CD4-positive, alpha-beta T cell (primary cell): ENCODE measurements at regions of chr10 and their contacts with region 1.

Region 1: GRCh38 chr10:72273410-72274212 is at the start of gene DDIT4:
- DNase-seq: peak; percentile 94 to 99 (median 97)
- ATAC-seq: peak; percentile 93
- H3K4me3 ChIP-seq: peak within 1 kb of the TSS; percentile 90
- H3K4me3 Mint-ChIP-seq: peak within 1 kb of the TSS; percentile 100
- H3K27ac ChIP-seq: peak within 1 kb of the TSS; percentile 78 to 88
- H3K27ac Mint-ChIP-seq: peak within 1 kb of the TSS; percentile 89
- H3K4me1 ChIP-seq: peaks cover 48% of the 10 kb centered on the region
- H3K4me1 Mint-ChIP-seq: peaks cover 64% of the 10 kb centered on the region
- H3K27me3 ChIP-seq: no peaks in the 10 kb centered on the region
- H3K27me3 Mint-ChIP-seq: no peaks in the 10 kb centered on the region
- CTCF ChIP-seq: no peak
- total RNA-seq, gene DDIT4: 427 to 436 TPM

Region 2: GRCh38 chr10:72016608-72017312 is 256.9 kb before region 1 on chr10:
- CTCF ChIA-PET with region 1: no interaction called
- POLR2A ChIA-PET with region 1: no interaction called
- intact Hi-C with region 1: no loop called
- DNase-seq: no peak
- ATAC-seq: no peak
- H3K4me3 ChIP-seq: no peak overlapping the region
- H3K4me3 Mint-ChIP-seq: no peak overlapping the region
- H3K27ac ChIP-seq: no peak overlapping the region
- H3K27ac Mint-ChIP-seq: no peak overlapping the region
- H3K4me1 ChIP-seq: peaks cover 5% of the 10 kb centered on the region
- H3K4me1 Mint-ChIP-seq: no peaks in the 10 kb centered on the region
- H3K27me3 ChIP-seq: no peaks in the 10 kb centered on the region
- H3K27me3 Mint-ChIP-seq: no peaks in the 10 kb centered on the region
- CTCF ChIP-seq: no peak

Region 3: GRCh38 chr10:72215652-72216549 is 57.7 kb before region 1 on chr10 and contains the starts of genes ANAPC16 and ASCC1:
- CTCF ChIA-PET with region 1: interaction called, 5 read pairs
- POLR2A ChIA-PET with region 1: interaction called, 15 read pairs
- intact Hi-C with region 1: loop called in 1 of 2 experiments (anchors 5 kb)
- DNase-seq: peak; percentile 86 to 97 (median 94)
- ATAC-seq: peak; percentile 79
- H3K4me3 ChIP-seq: peak within 1 kb of the TSS; percentile 83
- H3K4me3 Mint-ChIP-seq: peak within 1 kb of the TSS; percentile 97
- H3K27ac ChIP-seq: peak within 1 kb of the TSS; percentile 89 to 98
- H3K27ac Mint-ChIP-seq: peak within 1 kb of the TSS; percentile 94
- H3K4me1 ChIP-seq: peaks cover 62% of the 10 kb centered on the region
- H3K4me1 Mint-ChIP-seq: peaks cover 50% of the 10 kb centered on the region
- H3K27me3 ChIP-seq: no peaks in the 10 kb centered on the region
- H3K27me3 Mint-ChIP-seq: no peaks in the 10 kb centered on the region
- CTCF ChIP-seq: no peak
- total RNA-seq, gene ANAPC16: 61.9 to 64.3 TPM
- total RNA-seq, gene ASCC1: 16.5 to 19.0 TPM

Region 4: GRCh38 chr10:72248468-72249151 is 25.0 kb before region 1 on chr10:
- CTCF ChIA-PET with region 1: interaction called, 4 read pairs
- POLR2A ChIA-PET with region 1: interaction called, 49 read pairs
- intact Hi-C with region 1: loop called (anchors 1 to 2 kb)
- DNase-seq: peak; percentile 54 to 96 (median 64)
- ATAC-seq: peak; percentile 87
- H3K4me3 ChIP-seq: peak overlapping the region; percentile 31
- H3K4me3 Mint-ChIP-seq: peak overlapping the region; percentile 85
- H3K27ac ChIP-seq: peak overlapping the region; percentile 20 to 62
- H3K27ac Mint-ChIP-seq: peak overlapping the region; percentile 96
- H3K4me1 ChIP-seq: peaks cover 99% of the 10 kb centered on the region
- H3K4me1 Mint-ChIP-seq: peaks cover 86% of the 10 kb centered on the region
- H3K27me3 ChIP-seq: no peaks in the 10 kb centered on the region
- H3K27me3 Mint-ChIP-seq: no peaks in the 10 kb centered on the region
- CTCF ChIP-seq: no peak

Region 5: GRCh38 chr10:72285972-72286521 is 12.4 kb after region 1 on chr10:
- CTCF ChIA-PET with region 1: interaction called, 7 read pairs
- POLR2A ChIA-PET with region 1: interaction called, 27 read pairs
- intact Hi-C with region 1: no loop called
- DNase-seq: peak in 1 of 14 experiments; percentile 23
- ATAC-seq: no peak
- H3K4me3 ChIP-seq: no peak overlapping the region
- H3K4me3 Mint-ChIP-seq: no peak overlapping the region
- H3K27ac ChIP-seq: no peak overlapping the region
- H3K27ac Mint-ChIP-seq: peak overlapping the region; percentile 71
- H3K4me1 ChIP-seq: peaks cover 33% of the 10 kb centered on the region
- H3K4me1 Mint-ChIP-seq: peaks cover 48% of the 10 kb centered on the region
- H3K27me3 ChIP-seq: no peaks in the 10 kb centered on the region
- H3K27me3 Mint-ChIP-seq: no peaks in the 10 kb centered on the region
- CTCF ChIP-seq: no peak

Region 6: DNA sequence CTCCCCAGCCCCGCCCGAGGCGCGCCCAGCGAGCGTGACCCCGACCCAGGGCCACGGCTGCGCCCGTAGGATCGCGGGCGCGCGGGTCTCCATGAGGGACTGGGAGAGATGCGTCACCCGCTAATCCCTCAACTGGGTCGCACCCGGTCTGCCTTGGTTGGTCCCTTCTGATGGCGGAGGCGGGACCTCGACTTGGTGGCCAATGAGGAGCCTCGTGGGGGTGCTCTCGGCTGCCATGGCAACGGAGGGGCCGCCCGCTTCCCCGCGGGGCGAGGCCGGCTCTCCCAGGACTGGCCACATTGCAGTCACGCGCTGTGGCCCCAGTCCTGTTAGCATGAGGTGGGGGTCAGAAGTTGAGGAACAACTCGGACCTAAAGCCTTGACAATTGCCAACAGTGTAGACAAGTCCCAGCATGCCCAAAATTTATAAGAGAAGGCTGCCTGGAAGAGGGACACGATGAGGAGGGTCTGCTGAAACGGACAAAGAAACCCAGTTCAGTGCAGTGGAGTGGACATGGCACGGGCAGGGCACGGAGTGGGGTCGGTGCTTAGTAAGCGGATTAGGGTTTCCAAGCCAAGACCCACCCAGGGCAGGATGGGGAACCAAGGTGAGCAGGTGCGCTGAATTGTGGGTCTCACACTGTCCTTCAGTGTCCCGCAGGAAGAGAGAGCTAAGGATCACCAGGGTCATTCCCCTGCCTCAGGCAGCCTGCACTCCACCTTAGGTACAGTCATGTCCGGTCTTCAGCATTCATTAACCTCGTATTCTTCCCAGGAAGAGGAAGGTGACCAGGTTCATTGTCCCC is 24.6 kb after region 1 on chr10:
- CTCF ChIA-PET with region 1: interaction called, 8 read pairs
- POLR2A ChIA-PET with region 1: interaction called, 96 read pairs
- intact Hi-C with region 1: loop called in 1 of 2 experiments (anchors 1 kb)
- DNase-seq: peak; percentile 68 to 97 (median 83)
- ATAC-seq: peak; percentile 57
- H3K4me3 ChIP-seq: peak overlapping the region; percentile 75
- H3K4me3 Mint-ChIP-seq: peak overlapping the region; percentile 82
- H3K27ac ChIP-seq: peak overlapping the region; percentile 89 to 98
- H3K27ac Mint-ChIP-seq: peak overlapping the region; percentile 96
- H3K4me1 ChIP-seq: peaks cover 56% of the 10 kb centered on the region
- H3K4me1 Mint-ChIP-seq: peaks cover 63% of the 10 kb centered on the region
- H3K27me3 ChIP-seq: no peaks in the 10 kb centered on the region
- H3K27me3 Mint-ChIP-seq: no peaks in the 10 kb centered on the region
- CTCF ChIP-seq: no peak

Region 7: GRCh38 chr10:72331601-72332422 is 58.2 kb after region 1 on chr10:
- CTCF ChIA-PET with region 1: interaction called, 54 read pairs
- POLR2A ChIA-PET with region 1: interaction called, 33 read pairs
- intact Hi-C with region 1: loop called (anchors 1 kb)
- DNase-seq: peak; percentile 77 to 95 (median 85)
- ATAC-seq: peak; percentile 65
- H3K4me3 ChIP-seq: peak overlapping the region; percentile 24
- H3K4me3 Mint-ChIP-seq: peak overlapping the region; percentile 76
- H3K27ac ChIP-seq: peak overlapping the region; percentile 30 to 71
- H3K27ac Mint-ChIP-seq: peak overlapping the region; percentile 94
- H3K4me1 ChIP-seq: peaks cover 100% of the 10 kb centered on the region
- H3K4me1 Mint-ChIP-seq: peaks cover 91% of the 10 kb centered on the region
- H3K27me3 ChIP-seq: no peaks in the 10 kb centered on the region
- H3K27me3 Mint-ChIP-seq: no peaks in the 10 kb centered on the region
- CTCF ChIP-seq: peak; percentile 12